ENCODE measurements at regions of chr17 and their contacts with region 1.

Region 1: DNA sequence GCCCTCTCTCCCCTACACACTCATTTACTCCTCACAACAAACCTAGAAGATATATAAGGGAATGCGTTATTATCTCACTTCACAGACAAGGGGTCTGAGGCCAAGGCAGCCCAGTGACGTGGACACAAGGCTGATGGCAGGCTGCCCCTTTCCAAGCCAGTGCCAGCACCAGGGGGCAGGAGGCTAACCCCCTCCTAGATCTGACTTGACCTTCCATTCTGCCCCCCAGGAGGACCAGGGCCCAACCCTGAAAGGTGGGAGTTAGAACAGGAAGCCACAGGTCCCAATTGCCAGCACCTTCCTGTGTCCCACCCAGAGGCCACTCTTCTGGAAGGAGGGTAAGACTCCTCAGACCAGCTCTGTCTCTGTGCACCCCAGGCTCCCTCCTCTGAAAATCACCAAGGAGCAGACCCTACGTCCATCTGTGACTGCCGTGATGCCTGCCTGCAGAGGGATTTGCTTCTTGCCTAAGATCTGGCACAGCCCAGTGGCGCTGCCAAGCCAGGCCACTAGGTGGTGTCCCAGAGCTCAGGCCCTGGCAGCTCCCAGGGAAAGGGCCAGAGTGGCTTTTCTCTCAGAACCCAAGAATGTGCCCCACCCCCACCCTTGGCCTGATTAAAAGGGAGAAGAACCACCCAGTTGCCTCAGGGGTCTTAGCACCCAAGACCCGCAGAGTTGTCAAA is 42.4 kb upstream of the MRPS23 start:
- DNase-seq: peak; percentile 95

Region 2: GRCh38 chr17:56939901-56940343 is 952.4 kb before region 1 on chr17:
- intact Hi-C with region 1: no loop called
- DNase-seq: no peak

Region 3: DNA sequence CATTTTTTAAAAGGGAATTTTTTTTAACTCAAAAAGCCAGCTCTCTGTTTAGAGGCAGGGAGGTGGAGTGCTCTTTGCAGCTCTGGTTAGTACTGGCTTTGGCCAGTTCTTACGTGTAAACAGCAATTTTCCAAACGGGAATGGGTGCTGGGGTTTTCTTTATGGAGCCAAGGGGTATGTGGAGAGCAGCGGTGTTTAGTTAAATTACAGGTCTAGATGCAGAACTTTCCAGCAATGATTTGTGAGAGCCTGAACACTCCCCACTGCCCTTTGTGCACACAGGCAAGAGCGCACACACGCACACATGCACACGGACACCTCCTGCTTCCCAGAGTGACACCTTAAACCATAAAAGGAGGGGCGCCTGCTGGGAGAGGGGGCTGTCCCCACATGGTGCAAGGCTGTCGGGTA is 495.8 kb before region 1 on chr17:
- intact Hi-C with region 1: no loop called
- DNase-seq: no peak

Region 4: GRCh38 chr17:57803025-57803424 is 89.3 kb before region 1 on chr17:
- intact Hi-C with region 1: no loop called
- DNase-seq: no peak

Region 5: DNA sequence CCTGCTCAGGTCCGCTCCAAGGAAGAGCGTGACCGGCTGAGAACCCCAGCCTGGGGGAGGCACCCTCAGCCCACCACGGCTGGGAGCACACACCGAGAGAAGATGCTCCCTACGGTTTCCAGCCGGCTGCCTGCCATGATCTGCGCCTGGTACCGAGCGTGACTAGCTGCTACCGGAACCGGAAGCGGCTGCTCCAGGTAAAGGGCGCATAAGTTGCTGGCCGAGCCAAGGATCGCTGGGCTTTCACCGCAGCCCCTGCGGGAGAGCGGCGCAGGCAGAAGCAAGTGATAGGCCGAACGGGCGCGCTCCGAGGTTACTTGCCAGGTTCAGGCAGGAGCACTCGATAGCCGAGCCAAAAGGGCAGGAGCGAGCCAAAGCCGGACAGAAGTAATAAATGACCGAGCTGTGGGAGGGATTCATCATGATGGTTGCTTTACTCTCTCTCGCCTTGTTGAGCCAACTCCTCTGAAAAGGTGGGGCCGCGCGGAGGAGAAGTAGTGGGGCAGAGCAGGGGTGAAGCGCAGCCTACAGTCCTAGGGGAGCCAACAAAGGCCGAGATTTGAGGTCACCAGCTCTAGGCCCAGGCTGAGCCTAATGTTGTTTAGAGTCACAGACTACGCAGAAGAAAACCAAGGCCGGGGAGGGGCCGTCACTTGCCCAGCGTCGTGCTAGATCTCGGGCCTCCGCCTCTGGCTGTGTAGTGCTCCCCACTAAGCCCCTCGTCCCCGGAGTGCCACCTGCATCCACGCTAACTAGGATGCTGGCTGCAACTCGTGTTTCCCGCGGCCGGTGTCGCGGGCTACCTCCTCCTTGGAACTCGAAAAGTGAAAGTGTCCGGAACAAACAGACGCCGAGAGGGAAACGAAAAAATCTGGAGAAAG is 42.2 kb before region 1 on chr17 and contains the start of gene MRPS23:
- intact Hi-C with region 1: loop called (anchors 2 kb)
- DNase-seq: peak; percentile 99
- total RNA-seq, gene MRPS23: 59.6 TPM

Region 6: GRCh38 chr17:57875309-57876115 is 16.8 kb before region 1 on chr17:
- intact Hi-C with region 1: loop called (anchors 1 kb)
- DNase-seq: no peak

Region 7: GRCh38 chr17:57955183-57955931 is 63.1 kb after region 1 on chr17 and contains the start of gene CUEDC1:
- intact Hi-C with region 1: loop called (anchors 1 kb)
- DNase-seq: peak; percentile 92
- total RNA-seq, gene CUEDC1: 46.6 TPM

Region 8: GRCh38 chr17:57987580-57988421 is 95.5 kb after region 1 on chr17 and contains the start of gene VEZF1:
- intact Hi-C with region 1: loop called (anchors 1 kb)
- DNase-seq: peak; percentile 89
- total RNA-seq, gene VEZF1: 55.3 TPM